ENCODE measurements at regions of chr11 and their contacts with region 1.

Region 1: GRCh38 chr11:9759519-9760192 is 95.8 kb downstream of the SWAP70 start:
- DNase-seq: peak; percentile 83
- H3K4me3 ChIP-seq: peak overlapping the region; percentile 77
- H3K27ac ChIP-seq: peak overlapping the region; percentile 96
- H3K4me1 ChIP-seq: peaks cover 70% of the 10 kb centered on the region
- H3K27me3 ChIP-seq: no peaks in the 10 kb centered on the region
- CTCF ChIP-seq: no peak

Region 2: DNA sequence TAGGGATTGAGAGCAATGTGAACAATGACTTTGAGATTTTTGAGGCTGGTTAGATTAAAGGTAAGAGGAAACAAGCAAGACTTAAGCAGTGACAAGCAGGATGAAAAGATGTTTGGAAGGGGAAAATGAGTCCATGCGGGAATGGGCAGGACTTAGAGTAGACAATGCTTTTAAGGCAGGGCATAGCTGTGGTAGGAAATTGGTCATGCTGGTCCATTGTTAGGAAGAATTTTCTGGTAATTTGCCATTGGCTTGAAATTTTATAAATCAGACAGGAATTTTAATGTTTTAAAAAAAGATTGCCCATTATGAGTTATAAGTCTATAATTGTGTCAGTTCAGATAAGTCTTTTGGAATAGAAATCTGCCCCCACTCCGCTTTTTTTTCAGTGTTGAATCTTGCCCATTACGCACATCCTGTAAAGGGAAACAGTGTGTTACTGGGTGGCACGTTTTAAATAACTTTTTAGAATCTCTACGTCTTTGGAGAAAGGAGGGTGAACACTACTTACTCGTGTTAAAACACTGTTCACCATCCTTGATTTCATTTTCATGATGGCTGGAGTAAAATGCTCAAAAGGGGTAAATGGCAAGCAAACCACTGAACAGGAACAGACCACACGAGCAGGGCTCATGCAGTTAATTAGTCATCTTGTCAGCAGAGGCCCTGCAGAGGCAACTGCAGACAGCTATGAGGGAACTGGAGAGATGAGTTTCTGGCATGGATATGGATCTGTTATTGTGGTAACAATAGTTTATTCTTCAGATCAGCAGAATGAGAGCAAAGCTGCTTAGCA is 70.7 kb before region 1 on chr11:
- intact Hi-C with region 1: no loop called
- DNase-seq: no peak
- H3K4me3 ChIP-seq: peak overlapping the region; percentile 18
- H3K27ac ChIP-seq: peak overlapping the region; percentile 76
- H3K4me1 ChIP-seq: peaks cover 66% of the 10 kb centered on the region
- H3K27me3 ChIP-seq: no peaks in the 10 kb centered on the region
- CTCF ChIP-seq: no peak

Region 3: DNA sequence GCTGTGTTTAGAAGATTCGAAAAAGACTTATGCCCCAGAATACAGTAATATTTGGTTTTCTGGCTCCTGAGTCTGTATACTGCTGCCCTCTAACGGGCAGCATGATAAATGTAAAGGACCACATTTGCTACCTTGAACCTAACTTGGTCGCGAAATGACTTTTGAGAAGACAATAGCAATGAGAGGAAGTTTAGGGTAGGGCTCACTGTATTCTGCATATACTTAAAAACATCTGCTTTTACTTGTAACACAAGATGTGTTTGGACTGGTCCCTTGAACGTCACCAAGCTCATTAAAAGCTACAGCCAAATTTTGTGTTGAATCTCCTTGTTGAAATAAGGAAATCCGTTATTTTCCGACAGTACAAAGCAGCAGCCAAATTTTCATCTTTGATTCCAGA is 213.3 kb after region 1 on chr11:
- intact Hi-C with region 1: loop called (anchors 5 kb)
- DNase-seq: no peak
- H3K4me3 ChIP-seq: no peak overlapping the region
- H3K27ac ChIP-seq: no peak overlapping the region
- H3K4me1 ChIP-seq: peaks cover 28% of the 10 kb centered on the region
- H3K27me3 ChIP-seq: no peaks in the 10 kb centered on the region
- CTCF ChIP-seq: peak; percentile 80

Measured in left ventricle myocardium inferior (tissue), 1 donor.